ENCODE measurements at regions of chr13 and their contacts with region 1.

Region 1: DNA sequence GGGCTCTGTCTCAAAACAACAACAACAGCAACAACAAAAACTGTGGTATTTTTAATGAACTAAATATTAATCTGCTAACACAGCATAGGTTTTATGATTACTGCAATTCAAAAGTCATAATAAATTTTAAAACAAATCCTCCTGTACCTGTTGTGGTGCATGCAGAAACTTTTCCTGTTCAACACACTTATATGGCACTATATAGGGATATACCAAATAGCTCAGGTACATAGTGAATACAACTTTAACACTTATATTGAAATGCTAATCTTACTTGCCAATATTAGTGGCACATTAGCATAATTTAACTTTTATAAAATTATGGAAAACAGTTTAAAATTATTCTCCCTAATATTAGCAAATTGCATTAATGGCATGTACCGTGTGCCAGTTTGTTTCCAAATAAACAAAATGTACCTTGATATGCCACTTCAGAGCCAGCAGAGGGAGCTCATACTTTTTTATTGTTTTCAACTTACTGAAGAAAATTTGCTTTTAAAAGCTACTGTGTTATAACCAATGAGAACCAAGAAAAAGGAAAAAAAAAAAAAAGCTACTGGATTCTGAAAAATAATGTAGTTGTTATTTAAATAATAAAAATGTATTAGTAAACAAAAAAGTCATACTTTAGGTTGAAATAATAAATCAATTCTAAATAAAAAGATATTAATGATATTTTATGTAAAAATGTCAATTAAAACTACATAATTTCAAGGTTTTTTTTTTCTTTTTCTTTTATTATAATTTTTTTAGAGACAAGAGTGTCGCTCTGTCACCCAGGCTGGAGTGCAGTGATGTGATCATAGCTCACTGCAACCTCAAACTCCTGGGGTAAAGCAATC is 18.0 kb upstream of the RBM26 start:
- DNase-seq: no peak
- ATAC-seq: peak; percentile 34; the same call in 1 of the 2 replicates
- H3K4me3 Mint-ChIP-seq: no peak overlapping the region
- H3K27ac Mint-ChIP-seq: no peak overlapping the region
- H3K4me1 Mint-ChIP-seq: no peaks in the 10 kb centered on the region
- H3K27me3 Mint-ChIP-seq: no peaks in the 10 kb centered on the region
- CTCF ChIP-seq: peak; percentile 50

Region 2: DNA sequence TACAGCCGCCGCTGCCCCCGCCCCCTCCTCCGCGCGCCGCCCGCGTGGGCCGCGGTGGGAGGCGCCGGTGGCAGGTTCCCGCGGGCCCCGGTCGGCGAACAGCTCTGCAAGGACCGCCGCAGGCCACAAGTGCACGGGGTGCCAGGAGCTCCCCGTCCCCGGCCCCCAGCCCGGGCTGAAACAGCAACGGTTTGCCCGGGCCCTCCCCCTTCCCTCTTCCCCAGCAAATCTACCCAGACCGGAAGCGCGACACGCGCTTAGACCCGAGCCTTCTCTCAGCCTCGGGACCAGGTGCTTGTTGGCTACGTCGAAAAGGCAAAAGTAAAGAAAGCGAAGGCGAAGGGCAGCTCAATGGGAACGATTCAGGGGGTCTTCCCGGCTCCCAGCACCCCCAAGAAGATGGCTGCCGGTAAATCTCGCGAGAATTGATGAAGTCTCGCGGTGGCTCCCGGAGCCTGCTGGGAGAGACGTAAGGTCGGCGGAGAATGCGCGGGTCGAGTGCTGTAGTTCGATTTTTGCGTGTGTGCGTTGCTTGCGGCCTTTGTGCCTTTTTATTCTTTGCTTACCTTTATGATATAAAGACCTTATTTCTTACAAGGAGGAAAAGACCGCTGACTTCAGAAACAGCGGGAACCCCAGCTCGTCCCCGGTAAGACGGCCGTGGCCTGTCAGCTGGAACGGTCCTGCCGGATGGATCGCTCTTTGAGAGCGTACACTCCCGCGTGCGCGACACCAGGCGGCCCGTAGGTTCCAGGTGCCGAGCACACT is 18.0 kb before region 1 on chr13 and contains the start of gene RBM26:
- CTCF ChIA-PET with region 1: interaction called, 11 read pairs
- POLR2A ChIA-PET with region 1: interaction called, 3 read pairs
- DNase-seq: peak; percentile 92
- ATAC-seq: peak; percentile 87
- H3K4me3 Mint-ChIP-seq: peak within 1 kb of the TSS; percentile 88
- H3K27ac Mint-ChIP-seq: peak within 1 kb of the TSS; percentile 97
- H3K4me1 Mint-ChIP-seq: peaks cover 36% of the 10 kb centered on the region
- H3K27me3 Mint-ChIP-seq: no peaks in the 10 kb centered on the region
- CTCF ChIP-seq: no peak
- total RNA-seq, gene RBM26: 57.7 to 64.1 TPM (median 59.0 TPM) in 3 replicates

Region 3: DNA sequence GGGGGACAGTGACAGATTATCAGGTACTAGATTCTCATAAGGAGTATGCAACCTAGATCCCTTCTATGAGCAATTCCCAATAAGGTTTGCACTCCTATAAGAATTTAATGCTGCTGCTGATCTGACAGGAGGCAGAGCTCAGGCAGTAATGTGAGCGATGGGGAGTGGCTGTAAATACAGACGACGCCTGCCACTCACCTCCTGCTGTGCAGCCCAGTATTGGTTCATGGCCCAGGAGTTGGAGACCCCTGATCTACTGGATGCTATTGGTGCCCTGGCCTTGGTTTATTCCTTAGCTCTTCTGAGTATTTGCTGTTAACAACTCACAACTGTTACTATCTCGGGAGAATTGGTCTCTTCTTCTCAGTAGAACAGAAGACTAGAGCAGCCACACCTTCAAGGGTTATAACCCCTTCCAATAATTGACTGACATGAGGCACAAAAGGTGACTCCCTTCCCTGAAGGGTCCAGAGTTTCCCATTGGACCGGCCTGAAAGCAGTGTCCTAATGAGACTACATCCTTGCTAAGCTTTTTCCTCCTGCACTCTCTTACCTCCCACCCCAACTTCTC is 17.0 kb after region 1 on chr13:
- CTCF ChIA-PET with region 1: interaction called, 15 read pairs
- POLR2A ChIA-PET with region 1: interaction called, 3 read pairs
- DNase-seq: no peak
- ATAC-seq: no peak
- H3K4me3 Mint-ChIP-seq: no peak overlapping the region
- H3K27ac Mint-ChIP-seq: no peak overlapping the region
- H3K4me1 Mint-ChIP-seq: peaks cover 18% of the 10 kb centered on the region
- H3K27me3 Mint-ChIP-seq: no peaks in the 10 kb centered on the region
- CTCF ChIP-seq: no peak

Region 4: DNA sequence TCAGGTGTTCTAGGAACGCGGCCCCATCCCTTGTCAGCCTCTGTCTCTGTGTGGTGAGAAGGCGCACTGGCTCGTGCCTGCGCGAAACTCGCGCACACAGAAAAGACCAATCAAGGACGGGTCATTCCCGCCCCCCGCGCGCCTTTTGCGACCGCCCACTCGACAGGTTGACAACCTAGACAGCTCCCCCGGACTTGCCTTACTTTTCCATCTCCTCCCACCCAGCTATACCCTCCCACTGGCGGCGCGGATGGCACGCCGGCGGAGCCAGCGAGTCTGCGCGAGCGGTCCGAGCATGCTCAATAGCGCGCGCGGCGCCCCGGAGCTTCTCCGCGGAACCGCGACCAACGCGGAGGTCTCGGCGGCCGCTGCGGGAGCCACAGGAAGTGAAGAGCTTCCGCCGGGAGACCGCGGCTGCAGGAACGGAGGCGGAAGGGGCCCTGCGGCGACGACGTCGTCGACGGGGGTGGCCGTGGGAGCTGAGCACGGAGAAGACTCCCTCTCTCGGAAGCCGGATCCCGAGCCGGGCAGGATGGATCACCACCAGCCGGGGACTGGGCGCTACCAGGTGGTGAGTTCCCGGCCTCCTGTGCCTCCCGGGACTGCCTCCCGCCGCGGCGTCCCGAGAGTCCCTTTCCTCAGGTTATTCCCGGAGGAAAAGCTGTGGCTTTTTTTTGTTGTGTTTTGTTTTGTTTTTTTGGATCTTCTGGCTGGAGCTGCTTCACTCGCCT is 57.1 kb after region 1 on chr13 and contains the start of gene NDFIP2:
- CTCF ChIA-PET with region 1: interaction called, 19 read pairs
- POLR2A ChIA-PET with region 1: interaction called, 5 read pairs
- DNase-seq: peak; percentile 77
- ATAC-seq: peak; percentile 78
- H3K4me3 Mint-ChIP-seq: peak within 1 kb of the TSS; percentile 95
- H3K27ac Mint-ChIP-seq: peak within 1 kb of the TSS; percentile 97
- H3K4me1 Mint-ChIP-seq: peaks cover 15% of the 10 kb centered on the region
- H3K27me3 Mint-ChIP-seq: peaks cover 19% of the 10 kb centered on the region
- CTCF ChIP-seq: no peak
- total RNA-seq, gene NDFIP2: 23.1 to 28.1 TPM (median 26.6 TPM) in 3 replicates

Region 5: GRCh38 chr13:79528759-79529191 is 104.8 kb after region 1 on chr13:
- CTCF ChIA-PET with region 1: interaction called, 54 read pairs
- POLR2A ChIA-PET with region 1: no interaction called
- DNase-seq: no peak
- ATAC-seq: no peak
- H3K4me3 Mint-ChIP-seq: no peak overlapping the region
- H3K27ac Mint-ChIP-seq: no peak overlapping the region
- H3K4me1 Mint-ChIP-seq: peaks cover 11% of the 10 kb centered on the region
- H3K27me3 Mint-ChIP-seq: no peaks in the 10 kb centered on the region
- CTCF ChIP-seq: no peak

Region 6: GRCh38 chr13:79541426-79542049 is 117.5 kb after region 1 on chr13:
- CTCF ChIA-PET with region 1: interaction called, 116 read pairs
- POLR2A ChIA-PET with region 1: no interaction called
- DNase-seq: no peak
- ATAC-seq: peak; percentile 36; the same call in 1 of the 2 replicates
- H3K4me3 Mint-ChIP-seq: no peak overlapping the region
- H3K27ac Mint-ChIP-seq: no peak overlapping the region
- H3K4me1 Mint-ChIP-seq: peaks cover 15% of the 10 kb centered on the region
- H3K27me3 Mint-ChIP-seq: no peaks in the 10 kb centered on the region
- CTCF ChIP-seq: peak; percentile 64